Dorsolateral prefrontal cortex (tissue), 120 donors: ENCODE measurements at regions of chr14 and their contacts with region 1.

Region 1: DNA sequence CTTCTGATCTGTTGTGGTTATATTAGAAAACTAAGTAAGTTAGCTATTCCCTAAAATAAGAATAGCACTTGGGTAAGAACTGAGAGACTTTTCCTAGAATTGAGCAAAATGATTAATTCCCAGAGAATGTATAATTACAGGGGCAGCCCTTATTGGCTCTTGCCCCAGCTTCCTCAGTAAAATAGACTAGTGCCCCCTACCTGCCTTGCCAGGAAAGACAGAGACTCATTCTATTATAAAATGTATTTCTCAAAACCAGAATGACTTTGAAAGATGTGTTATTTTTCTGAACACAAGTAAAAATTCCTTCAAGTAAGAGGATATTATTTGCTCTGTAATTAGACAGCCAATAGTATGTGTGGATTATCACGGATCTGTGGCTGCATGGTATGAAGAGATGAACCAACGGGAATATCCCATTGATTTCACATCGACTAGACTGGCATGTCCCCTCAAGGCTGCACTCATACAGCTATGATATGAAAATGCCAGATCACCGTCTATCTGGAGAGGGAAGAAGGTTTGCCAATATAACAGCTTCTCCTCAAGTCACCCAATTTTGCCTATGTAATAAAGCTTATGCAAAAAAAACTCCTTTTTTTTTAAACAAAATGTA is 7.4 kb upstream of the GLRX5 start:
- DNase-seq: peak in 1 of 10 donors; percentile 67
- H3K4me3 ChIP-seq: peak overlapping the region in 2 of 59 donors; percentile 8 to 15
- H3K27ac ChIP-seq: peak overlapping the region in 38 of 59 donors; percentile 7 to 87 (median 58)
- H3K27me3 ChIP-seq: no peaks in the 10 kb centered on the region
- CTCF ChIP-seq: peak; percentile 79 to 98 (median 90)

Region 2: GRCh38 chr14:94867946-94868771 is 659.3 kb before region 1 on chr14:
- intact Hi-C with region 1: loop called in 1 of 2 experiments (anchors 10 kb)
- DNase-seq: peak in 9 of 10 donors; percentile 45 to 84 (median 69)
- H3K4me3 ChIP-seq: peak overlapping the region in 45 of 59 donors; percentile 3 to 63 (median 33)
- H3K27ac ChIP-seq: peak overlapping the region in 32 of 59 donors; percentile 2 to 83 (median 50)
- H3K27me3 ChIP-seq: peaks cover 0 to 18% (median 0%) of the 10 kb centered on the region in 45 donors
- CTCF ChIP-seq: peak in 4 of 56 donors; percentile 10 to 23 (median 20)

Region 3: GRCh38 chr14:95442633-95443021 is 84.9 kb before region 1 on chr14:
- intact Hi-C with region 1: loop called (anchors 1 kb)
- DNase-seq: peak; percentile 79 to 91 (median 88)
- H3K4me3 ChIP-seq: no peak overlapping the region
- H3K27ac ChIP-seq: peak overlapping the region in 39 of 59 donors; percentile 2 to 75 (median 50)
- H3K27me3 ChIP-seq: no peaks in the 10 kb centered on the region
- CTCF ChIP-seq: peak; percentile 47 to 97 (median 91)